SK-N-SH (cell line): ENCODE measurements at regions of chr4 and their contacts with region 1.

Region 1: DNA sequence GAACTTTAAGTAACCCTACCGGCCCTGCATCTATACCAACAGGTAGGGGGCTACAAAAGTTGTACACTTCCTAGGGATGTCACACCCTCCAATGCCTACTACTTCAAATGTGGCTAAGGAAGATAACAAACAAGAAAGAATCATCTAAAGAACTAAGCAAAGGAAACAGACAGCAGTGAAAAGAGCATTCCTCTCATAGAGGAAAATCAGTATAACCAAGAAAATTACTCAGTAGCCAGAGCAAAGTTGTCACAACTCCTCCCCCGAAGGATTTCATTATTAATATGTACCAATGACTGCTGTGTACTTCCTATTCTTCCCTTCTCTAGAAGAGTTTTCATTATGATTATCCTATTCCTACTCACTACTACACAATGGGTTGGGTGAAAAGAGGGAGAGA is 12.6 kb downstream of the ANKRD17 start:
- DNase-seq: no peak
- H3K4me3 ChIP-seq: no peak overlapping the region
- H3K27ac ChIP-seq: no peak overlapping the region
- H3K4me1 ChIP-seq: no peaks in the 10 kb centered on the region
- H3K27me3 ChIP-seq: no peaks in the 10 kb centered on the region
- CTCF ChIP-seq: no peak
- EP300 ChIP-seq: no peak
- RAD21 ChIP-seq: no peak

Region 2: GRCh38 chr4:73222466-73223257 is 23.3 kb before region 1 on chr4:
- CTCF ChIA-PET with region 1: no interaction called
- POLR2A ChIA-PET with region 1: no interaction called
- DNase-seq: peak; percentile 73
- H3K4me3 ChIP-seq: peak overlapping the region; percentile 71
- H3K27ac ChIP-seq: peak overlapping the region; percentile 93 to 96
- H3K4me1 ChIP-seq: peaks cover 11 to 13% of the 10 kb centered on the region in 2 experiments
- H3K27me3 ChIP-seq: no peaks in the 10 kb centered on the region
- CTCF ChIP-seq: no peak
- EP300 ChIP-seq: peak; percentile 62; a peak in 2 of 4 replicates
- RAD21 ChIP-seq: no peak

Region 3: GRCh38 chr4:73258686-73259570 is 13.0 kb after region 1 on chr4 and contains the start of gene ANKRD17:
- CTCF ChIA-PET with region 1: interaction called, 13 read pairs
- POLR2A ChIA-PET with region 1: no interaction called
- DNase-seq: peak; percentile 91
- H3K4me3 ChIP-seq: peak within 1 kb of the TSS; percentile 75 to 94
- H3K27ac ChIP-seq: peak within 1 kb of the TSS; percentile 94 to 99
- H3K4me1 ChIP-seq: peaks cover 7 to 9% of the 10 kb centered on the region in 2 experiments; a peak in 2 of 4 replicates
- H3K27me3 ChIP-seq: no peaks in the 10 kb centered on the region
- CTCF ChIP-seq: no peak
- EP300 ChIP-seq: peak in 1 of 2 experiments; percentile 1; a peak in 1 of 4 replicates
- RAD21 ChIP-seq: no peak
- polyA plus RNA-seq, gene ANKRD17: 25.6 and 33.1 TPM in 2 replicates

Region 4: DNA sequence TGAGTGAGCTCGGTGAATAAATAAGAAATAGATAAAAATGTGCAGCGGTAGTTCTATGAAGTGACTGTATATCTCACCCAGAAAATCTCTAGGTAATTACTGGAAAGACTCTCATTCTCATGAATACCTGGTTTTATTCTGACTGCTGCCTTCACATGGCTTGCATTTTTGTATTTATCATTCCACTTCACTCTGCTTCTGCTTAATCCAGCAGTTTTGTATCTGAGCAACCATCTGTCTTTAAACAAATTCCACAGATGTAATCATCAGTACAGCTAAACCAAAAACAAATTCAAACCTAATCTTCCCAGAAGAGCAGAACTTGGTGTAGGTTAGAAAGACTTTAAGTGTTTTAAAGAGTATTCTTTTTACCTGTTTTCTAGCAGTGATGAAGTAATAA is 147.0 kb after region 1 on chr4:
- CTCF ChIA-PET with region 1: no interaction called
- POLR2A ChIA-PET with region 1: no interaction called
- DNase-seq: no peak
- H3K4me3 ChIP-seq: no peak overlapping the region
- H3K27ac ChIP-seq: no peak overlapping the region
- H3K4me1 ChIP-seq: no peaks in the 10 kb centered on the region
- H3K27me3 ChIP-seq: peaks cover 13% of the 10 kb centered on the region; the same call in 1 of the 2 replicates
- CTCF ChIP-seq: no peak
- EP300 ChIP-seq: no peak
- RAD21 ChIP-seq: no peak